T-cell (primary cell): ENCODE measurements at regions of chr2 and their contacts with region 1.

Region 1: GRCh38 chr2:113889471-113890252 is at the start of gene ACTR3:
- DNase-seq: peak; percentile 93 to 99 (median 97)
- ATAC-seq: peak; percentile 88 to 93 (median 89)
- H3K4me3 ChIP-seq: peak within 1 kb of the TSS; percentile 96 to 97
- H3K4me3 Mint-ChIP-seq: peak within 1 kb of the TSS; percentile 87 to 98 (median 96)
- H3K27ac ChIP-seq: peak within 1 kb of the TSS; percentile 94
- H3K27ac Mint-ChIP-seq: peak within 1 kb of the TSS; percentile 97 to 98
- H3K4me1 ChIP-seq: peaks cover 42 to 59% of the 10 kb centered on the region in 2 experiments
- H3K4me1 Mint-ChIP-seq: peaks cover 79 to 83% (median 82%) of the 10 kb centered on the region in 3 donors
- H3K27me3 ChIP-seq: no peaks in the 10 kb centered on the region
- H3K27me3 Mint-ChIP-seq: no peaks in the 10 kb centered on the region
- total RNA-seq, gene ACTR3: 228 to 277 (median 255) TPM

Region 2: DNA sequence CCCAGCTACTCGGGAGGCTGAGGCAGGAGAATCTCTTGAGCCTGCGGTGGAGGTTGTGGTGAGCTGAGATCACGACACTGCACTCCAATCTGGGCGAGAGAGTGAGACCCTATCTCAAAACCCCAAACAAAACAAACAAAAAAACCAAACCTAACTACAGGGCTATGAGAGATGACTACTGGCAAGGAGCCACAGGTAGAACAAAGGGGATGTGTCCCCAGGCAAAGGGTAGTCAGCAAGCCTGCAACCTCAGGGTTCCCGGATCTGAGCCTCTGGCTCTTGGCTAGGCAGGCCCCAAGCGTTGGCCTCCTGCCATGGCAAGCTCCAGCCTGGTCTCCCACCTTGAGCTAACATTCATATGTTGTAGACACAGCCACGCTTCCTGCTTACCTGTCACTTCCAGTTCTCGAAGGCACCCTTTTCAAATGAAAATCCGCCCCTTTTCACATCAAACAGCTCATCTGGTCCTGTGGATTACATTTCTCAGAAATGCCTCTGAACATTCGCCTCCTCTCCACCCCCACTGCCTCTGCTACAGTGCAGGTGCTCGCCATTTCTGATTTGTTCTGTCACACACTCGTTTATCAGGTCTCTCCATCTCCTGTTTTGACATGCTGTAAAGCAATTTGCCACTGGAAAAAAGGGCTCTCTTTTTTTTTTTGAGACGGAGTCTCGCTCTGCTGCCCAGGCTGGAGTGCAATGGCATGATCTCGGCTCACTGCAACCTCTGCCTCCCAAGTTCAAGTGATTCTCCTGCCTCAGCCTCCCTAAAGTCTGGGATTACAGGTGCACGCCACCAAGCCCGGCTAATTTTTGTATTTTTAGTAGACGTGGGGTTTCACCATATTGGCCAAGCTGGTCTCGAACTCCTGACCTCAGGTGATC is 12.9 kb before region 1 on chr2:
- CTCF ChIA-PET with region 1: interaction called, 3 to 12 read pairs
- POLR2A ChIA-PET with region 1: interaction called in 1 of 2 experiments, 3 read pairs
- DNase-seq: peak; percentile 24 to 91 (median 76)
- ATAC-seq: peak; percentile 89 to 92 (median 91)
- H3K4me3 ChIP-seq: peak overlapping the region in 1 of 2 donors; percentile 8
- H3K4me3 Mint-ChIP-seq: peak overlapping the region; percentile 34 to 61 (median 41)
- H3K27ac ChIP-seq: peak overlapping the region; percentile 64
- H3K27ac Mint-ChIP-seq: peak overlapping the region; percentile 82 to 96
- H3K4me1 ChIP-seq: peaks cover 16 to 23% of the 10 kb centered on the region in 2 experiments
- H3K4me1 Mint-ChIP-seq: peaks cover 44 to 55% (median 52%) of the 10 kb centered on the region in 3 donors
- H3K27me3 ChIP-seq: no peaks in the 10 kb centered on the region
- H3K27me3 Mint-ChIP-seq: no peaks in the 10 kb centered on the region